PC-9 (cell line): ENCODE measurements at regions of chr7 and their contacts with region 1.

Region 1: GRCh38 chr7:3787717-3788264 is 486.7 kb downstream of the SDK1 start:
- DNase-seq: peak in 1 of 2 experiments; percentile 5
- H3K4me3 ChIP-seq: no peak overlapping the region
- H3K27ac ChIP-seq: no peak overlapping the region
- H3K4me1 ChIP-seq: no peaks in the 10 kb centered on the region
- H3K27me3 ChIP-seq: peaks cover 76% of the 10 kb centered on the region
- CTCF ChIP-seq: no peak

Region 2: DNA sequence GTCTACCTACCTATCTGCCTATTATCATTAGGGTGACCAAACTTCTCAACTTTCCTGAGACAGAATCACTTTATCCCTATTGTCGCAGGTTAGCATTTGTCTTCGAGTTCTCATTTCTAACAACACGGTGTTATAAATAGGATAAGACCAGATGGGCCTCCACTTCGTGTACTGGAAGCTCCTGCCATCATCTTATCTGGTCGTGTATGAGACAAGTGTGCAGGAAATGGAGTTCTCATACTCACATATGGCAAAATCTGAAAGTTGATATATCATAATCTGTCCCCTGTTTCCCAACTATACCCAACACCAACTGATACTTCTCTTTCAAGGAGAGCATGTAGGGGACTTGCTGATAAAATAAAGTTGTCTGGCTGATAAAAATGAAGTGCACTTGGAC is 606.9 kb after region 1 on chr7:
- CTCF ChIA-PET with region 1: interaction called, 15 read pairs
- POLR2A ChIA-PET with region 1: no interaction called
- intact Hi-C with region 1: no loop called
- DNase-seq: no peak
- H3K4me3 ChIP-seq: no peak overlapping the region
- H3K27ac ChIP-seq: no peak overlapping the region
- H3K4me1 ChIP-seq: no peaks in the 10 kb centered on the region
- H3K27me3 ChIP-seq: peaks cover 83% of the 10 kb centered on the region
- CTCF ChIP-seq: no peak